Left cardiac atrium (tissue), 4 donors: ENCODE measurements at regions of chr11 and their contacts with region 1.

Region 1: DNA sequence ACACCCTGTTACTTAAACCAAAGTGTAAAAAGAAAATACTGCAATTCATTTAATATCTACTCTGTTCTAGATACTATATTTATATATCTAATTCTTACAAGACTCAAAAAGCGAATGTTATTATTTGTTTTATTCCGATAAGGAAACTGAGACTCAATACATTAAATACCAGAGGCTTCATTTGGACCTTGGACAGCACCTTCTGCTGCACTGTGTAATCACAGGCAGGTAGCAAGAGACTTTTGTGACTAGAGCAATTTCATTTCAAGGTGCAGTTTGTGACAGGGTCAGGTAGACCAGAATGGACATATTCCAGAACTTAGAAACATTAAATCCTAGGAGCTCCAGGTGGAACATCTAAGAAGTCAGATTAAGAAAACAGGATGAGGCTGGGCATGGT is 21.4 kb upstream of the DNAJB13 start:
- DNase-seq: no peak
- ATAC-seq: no peak

Region 2: DNA sequence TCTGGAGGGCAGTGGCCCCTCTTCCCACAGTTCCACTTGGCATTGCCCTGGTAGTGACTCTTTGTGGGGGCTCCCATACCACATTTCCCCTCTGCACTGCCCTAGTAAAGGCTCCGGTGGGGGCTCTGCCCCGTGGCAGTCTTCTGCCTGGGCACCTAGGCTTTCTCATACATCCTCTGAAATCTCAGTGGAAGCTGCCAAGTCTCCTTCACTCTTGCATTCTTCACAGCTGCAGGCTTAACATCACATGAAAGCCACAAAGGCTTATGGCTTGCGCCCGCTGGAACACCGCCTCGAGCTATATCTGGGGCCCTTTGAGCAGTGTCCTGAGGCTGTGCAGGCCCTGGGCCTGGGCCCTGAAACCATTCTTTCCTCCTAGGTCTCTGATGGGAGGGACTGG is 257.7 kb before region 1 on chr11:
- intact Hi-C with region 1: loop called in 1 of 2 experiments (anchors 5 kb)
- DNase-seq: peak; percentile 31
- ATAC-seq: peak; percentile 80 to 81

Region 3: DNA sequence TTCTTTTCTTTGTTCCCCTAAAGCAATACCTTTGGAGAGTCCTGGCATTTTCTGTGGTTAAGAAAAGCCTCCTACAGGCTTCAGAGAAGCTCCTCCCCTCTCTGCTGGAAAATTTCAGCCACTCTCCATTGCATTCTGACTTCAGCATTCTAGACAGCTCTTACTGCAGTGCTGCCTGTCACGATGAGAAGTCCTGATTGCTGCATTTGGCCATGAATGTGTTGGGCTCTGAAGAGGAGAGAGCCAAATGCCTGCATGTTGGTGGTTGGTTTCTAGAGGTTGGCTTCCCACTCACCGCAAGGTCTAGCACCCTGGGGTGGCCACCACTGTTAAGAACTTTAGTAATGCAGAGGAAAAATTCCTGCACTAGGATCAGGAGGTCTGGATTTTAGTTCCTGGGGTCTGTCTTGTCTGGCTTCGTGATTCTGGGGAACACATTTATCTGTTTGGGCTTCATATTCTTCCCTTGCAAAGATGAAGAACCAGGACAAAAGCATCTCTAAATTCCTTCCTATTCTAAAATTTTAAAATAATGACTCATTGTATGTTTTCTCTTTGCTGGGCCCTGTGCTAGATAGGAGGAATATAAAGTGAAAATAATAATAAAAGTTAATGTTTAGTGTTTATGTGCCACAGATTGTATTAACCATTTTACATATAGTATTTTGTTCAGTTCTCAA is 90.8 kb before region 1 on chr11:
- intact Hi-C with region 1: no loop called
- DNase-seq: no peak
- ATAC-seq: peak; percentile 36 to 70